Calu3 (cell line): ENCODE measurements at regions of chr9 and their contacts with region 1.

Region 1: DNA sequence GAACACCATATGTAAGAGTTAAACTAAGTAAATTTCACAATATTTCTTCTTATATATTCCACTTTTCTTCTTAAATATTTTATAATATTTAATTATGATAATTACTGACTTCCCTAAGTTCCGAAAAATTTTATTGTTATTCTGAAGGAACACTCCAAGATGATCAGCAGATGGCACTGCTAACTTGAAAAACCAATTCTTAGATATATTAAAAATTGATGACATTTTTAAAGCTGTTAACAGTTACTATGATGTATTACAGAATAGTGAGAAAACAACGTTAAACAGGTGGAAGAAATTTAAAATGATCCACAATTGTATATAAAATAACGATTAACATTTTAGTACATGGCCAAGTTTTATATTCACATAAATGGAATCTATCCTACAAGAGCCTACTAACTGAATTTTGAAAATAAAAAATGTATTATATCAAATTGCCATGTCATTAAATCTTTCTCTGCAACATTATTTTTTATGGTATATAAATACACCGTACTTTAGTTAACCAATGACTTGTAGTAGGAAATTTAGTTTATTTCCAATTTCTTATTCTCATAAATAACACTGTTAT is 30.1 kb upstream of the MUSK start:
- DNase-seq: no peak
- H3K4me3 Mint-ChIP-seq: no peak overlapping the region
- H3K27ac Mint-ChIP-seq: no peak overlapping the region
- H3K4me1 Mint-ChIP-seq: no peaks in the 10 kb centered on the region
- H3K27me3 Mint-ChIP-seq: no peaks in the 10 kb centered on the region
- CTCF ChIP-seq: no peak

Region 2: DNA sequence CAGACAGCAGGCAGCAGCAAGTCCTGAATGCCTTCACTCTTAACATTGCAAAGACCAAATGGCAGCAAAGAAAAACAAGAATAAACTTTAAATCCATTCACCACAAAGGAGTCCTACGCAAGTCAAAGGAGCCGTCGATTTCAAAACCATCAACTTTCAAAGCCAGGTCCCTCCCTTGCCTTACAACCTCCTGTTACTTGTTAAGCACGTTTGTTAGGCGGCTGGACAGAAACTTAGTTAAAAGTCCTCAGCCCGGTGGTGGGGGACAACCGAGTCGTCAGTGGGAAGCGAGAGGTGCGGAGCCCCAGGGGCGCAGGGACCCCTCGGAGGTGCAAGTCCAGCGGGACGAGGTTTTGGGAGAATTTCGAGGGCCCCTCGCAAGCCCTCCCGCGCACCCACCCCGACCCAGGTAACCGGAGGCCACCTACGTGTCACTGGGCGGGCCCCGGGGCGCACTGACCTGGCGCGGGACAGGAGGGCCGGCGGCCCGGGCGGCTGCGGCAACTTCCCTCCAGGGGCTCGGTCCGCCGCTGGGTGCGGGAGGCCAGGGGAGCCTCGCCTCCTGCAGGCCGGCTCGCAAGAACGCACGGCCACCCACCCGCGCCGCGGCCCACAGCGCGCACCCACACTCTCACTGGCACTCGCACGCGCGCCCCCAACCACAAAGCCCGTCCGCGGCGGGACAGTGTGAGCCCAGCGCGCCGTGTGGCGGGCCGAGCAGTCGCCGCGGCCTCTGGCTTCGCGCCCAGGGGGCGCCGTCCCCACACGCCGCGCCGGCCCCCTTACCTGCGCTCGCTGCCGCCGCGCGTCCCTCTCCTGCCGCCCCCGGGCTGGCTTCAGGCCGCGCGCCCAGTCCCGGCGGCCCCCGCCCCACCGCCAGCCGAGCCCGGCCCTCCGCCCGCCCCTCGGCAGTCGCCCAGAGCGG is 399.2 kb after region 1 on chr9:
- CTCF ChIA-PET with region 1: interaction called, 3 read pairs
- intact Hi-C with region 1: loop called (anchors 5 kb)
- DNase-seq: peak; percentile 56
- H3K4me3 Mint-ChIP-seq: peak overlapping the region; percentile 78
- H3K27ac Mint-ChIP-seq: peak overlapping the region; percentile 42
- H3K4me1 Mint-ChIP-seq: peaks cover 21% of the 10 kb centered on the region
- H3K27me3 Mint-ChIP-seq: no peaks in the 10 kb centered on the region
- CTCF ChIP-seq: no peak

Region 3: GRCh38 chr9:111399772-111400563 is 761.5 kb after region 1 on chr9:
- CTCF ChIA-PET with region 1: no interaction called
- intact Hi-C with region 1: loop called (anchors 10 kb)
- DNase-seq: peak; percentile 57
- H3K4me3 Mint-ChIP-seq: no peak overlapping the region
- H3K27ac Mint-ChIP-seq: no peak overlapping the region
- H3K4me1 Mint-ChIP-seq: no peaks in the 10 kb centered on the region
- H3K27me3 Mint-ChIP-seq: no peaks in the 10 kb centered on the region
- CTCF ChIP-seq: peak; percentile 59